Right ventricle myocardium inferior (tissue), 1 donor: ENCODE measurements at regions of chr13 and their contacts with region 1.

Region 1: DNA sequence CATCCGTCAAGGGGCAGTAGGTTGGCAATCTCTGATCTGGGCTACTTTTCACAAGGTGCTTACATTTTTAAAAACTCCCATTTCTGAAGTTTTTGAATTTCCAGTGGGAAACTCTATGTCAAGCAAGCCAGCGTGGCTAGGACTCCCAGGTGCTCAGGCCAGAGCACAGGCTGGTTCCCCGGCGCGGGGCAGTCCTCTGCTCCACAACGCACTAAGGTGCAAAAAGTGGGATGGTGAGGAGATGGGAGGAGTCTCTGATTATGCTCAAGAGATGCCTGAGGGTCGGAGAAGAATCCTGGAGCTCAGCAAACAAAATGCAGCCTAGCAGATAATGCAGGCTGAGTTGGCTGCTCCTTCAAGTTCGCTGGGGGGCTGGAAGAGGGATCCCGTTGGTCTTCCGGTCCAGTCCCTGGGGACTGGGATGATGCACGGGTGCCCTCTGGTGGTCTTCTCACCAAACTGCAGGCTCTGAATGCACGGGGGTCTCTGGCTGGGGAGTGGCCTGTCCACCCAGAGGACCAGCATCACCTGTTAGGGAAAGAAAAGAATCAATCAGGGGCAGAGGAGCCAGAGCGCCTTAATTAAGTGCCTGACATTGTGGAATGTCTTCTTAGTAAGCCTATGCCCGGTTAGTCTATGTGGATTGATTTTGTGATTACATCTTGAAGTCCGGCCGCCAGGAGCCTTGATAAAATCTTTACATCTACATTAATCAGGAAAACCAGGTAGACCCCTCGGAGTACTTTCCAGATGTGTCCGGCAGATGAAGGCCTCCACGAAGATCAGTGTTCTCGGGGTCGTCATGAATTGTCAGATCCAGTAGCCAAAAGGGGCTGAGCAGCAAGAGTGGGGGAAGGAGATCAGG is 244.4 kb upstream of the MAB21L1 start:
- DNase-seq: no peak
- ATAC-seq: no peak

Region 2: GRCh38 chr13:35475960-35476943 is 244.7 kb before region 1 on chr13 and contains the start of gene MAB21L1:
- intact Hi-C with region 1: loop called (anchors 10 kb)
- DNase-seq: peak; percentile 56
- ATAC-seq: peak; percentile 34
- total RNA-seq, gene MAB21L1: 0.35 TPM

Region 3: GRCh38 chr13:35630551-35631275 is 90.2 kb before region 1 on chr13:
- intact Hi-C with region 1: loop called (anchors 2 kb)
- DNase-seq: no peak
- ATAC-seq: peak; percentile 84

Region 4: DNA sequence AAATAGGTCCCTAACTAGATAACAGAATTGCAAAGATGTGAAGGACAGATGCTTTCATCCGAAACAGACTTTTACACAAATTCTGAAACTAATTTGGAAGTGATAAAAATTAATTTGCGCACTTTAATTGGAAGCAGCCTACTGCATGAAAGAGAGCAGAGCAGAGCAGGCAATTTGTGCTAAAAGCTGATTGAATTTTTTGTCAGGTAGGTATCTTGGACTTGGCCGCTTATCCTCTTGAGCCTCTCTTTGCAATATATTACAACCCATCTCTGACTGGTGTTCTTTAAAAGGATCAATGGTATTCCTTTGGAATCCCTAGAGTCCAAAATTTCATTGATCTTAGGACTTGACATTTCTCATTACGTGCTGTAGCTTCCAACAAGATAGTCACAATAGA is 61.1 kb before region 1 on chr13:
- intact Hi-C with region 1: no loop called
- DNase-seq: no peak
- ATAC-seq: no peak

Region 5: GRCh38 chr13:35789335-35790165 is 68.6 kb after region 1 on chr13:
- intact Hi-C with region 1: loop called (anchors 2 kb)
- DNase-seq: no peak
- ATAC-seq: peak; percentile 35

Region 6: DNA sequence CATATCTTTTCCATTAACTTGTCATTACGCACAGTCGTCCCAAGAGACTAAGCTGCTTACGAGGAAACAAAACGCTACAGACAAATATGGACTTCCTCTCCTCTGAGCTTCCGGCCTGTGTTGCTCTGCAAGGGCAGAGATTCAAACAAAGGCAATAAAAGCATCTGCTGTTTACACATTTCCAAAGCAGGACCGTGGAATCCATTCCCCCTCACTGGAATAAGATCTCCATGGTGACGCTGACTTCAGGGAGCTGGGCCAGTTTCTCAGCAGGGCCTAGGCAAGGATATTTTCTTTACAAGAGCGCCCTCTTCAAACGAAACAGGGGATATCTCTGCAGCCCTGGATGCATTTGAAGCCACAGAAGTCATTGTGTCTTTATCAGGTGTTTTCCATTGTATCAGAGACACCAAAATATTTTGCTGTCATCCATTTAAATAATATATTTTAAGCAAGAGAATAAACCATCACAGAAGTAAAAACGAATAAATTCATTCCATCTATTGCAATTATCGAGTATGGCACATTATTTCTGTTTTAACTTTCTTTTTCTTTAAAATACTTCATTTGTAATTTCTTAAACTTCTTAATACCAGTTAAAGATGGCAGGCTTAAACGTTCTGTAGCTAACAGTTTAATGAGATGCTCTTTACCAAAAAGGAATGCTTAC is 232.8 kb after region 1 on chr13:
- intact Hi-C with region 1: loop called (anchors 2 kb)
- DNase-seq: peak; percentile 78
- ATAC-seq: peak; percentile 90